ENCODE measurements at regions of chr17 and their contacts with region 1.

Region 1: GRCh38 chr17:75784473-75785015 is at the start of gene UNK:
- DNase-seq: peak; percentile 89 to 98 (median 95)
- ATAC-seq: peak; percentile 75 to 82 (median 79)
- H3K4me3 ChIP-seq: peak within 1 kb of the TSS; percentile 75 to 82
- H3K4me3 Mint-ChIP-seq: peak within 1 kb of the TSS; percentile 81 to 91 (median 87)
- H3K27ac ChIP-seq: peak within 1 kb of the TSS; percentile 100
- H3K27ac Mint-ChIP-seq: peak within 1 kb of the TSS; percentile 99 to 100
- H3K4me1 ChIP-seq: peaks cover 27 to 42% of the 10 kb centered on the region in 2 experiments
- H3K4me1 Mint-ChIP-seq: peaks cover 50 to 60% (median 57%) of the 10 kb centered on the region in 3 donors
- H3K27me3 ChIP-seq: no peaks in the 10 kb centered on the region
- H3K27me3 Mint-ChIP-seq: peaks cover 0 to 1% of the 10 kb centered on the region in 2 donors
- total RNA-seq, gene UNK: 37.1 to 50.3 (median 39.2) TPM

Region 2: DNA sequence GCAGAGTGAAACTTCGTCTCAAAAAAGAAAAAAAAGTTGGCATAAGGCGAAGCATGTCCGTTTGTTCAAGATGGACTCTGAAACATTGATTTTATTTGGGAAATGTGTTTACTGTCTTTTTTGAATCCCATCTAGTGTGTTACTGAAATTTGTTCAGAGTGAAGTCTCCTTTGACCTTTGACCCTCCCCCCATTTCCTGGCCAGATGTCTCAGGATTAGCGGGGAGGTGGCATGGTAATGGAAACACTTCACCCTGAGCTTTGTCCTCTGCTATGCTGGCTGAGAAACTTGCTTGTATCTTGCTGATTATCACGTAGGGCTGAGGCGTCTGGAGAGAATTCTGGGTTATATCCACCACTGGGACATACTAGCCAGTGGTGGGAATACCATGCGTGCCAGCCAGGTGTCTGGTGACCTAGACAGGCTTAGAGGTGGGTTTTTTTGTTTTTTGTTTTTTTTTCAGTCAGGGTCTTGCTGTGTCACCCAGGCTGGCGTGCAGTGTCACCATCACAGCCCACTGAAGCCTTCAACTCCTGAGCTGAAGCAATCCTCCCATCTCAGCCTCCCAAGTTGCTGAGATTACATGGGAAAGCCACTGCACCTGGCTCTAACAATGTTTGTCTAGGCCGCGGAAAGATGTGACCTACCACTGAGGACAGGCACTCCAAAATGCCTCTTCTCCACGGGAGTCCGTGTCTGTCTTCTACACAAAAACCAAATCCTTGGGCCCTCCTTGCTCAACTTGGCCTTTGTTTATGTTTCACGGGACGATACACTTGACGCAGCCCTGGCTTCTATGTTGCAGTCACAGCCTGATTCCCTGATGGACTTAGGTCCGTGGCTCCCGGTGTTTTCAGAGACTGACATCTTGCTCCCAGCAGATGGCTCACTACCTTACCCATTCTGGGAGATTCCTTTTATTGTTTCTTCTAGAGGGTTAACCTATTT is 12.9 kb before region 1 on chr17:
- CTCF ChIA-PET with region 1: interaction called in 1 of 2 experiments, 11 read pairs
- POLR2A ChIA-PET with region 1: interaction called in 1 of 2 experiments, 16 read pairs
- DNase-seq: no peak
- ATAC-seq: no peak
- H3K4me3 ChIP-seq: no peak overlapping the region
- H3K4me3 Mint-ChIP-seq: no peak overlapping the region
- H3K27ac ChIP-seq: no peak overlapping the region
- H3K27ac Mint-ChIP-seq: peak overlapping the region in 1 of 2 donors; percentile 55
- H3K4me1 ChIP-seq: peaks cover 2 to 6% of the 10 kb centered on the region in 2 experiments
- H3K4me1 Mint-ChIP-seq: peaks cover 14 to 20% (median 14%) of the 10 kb centered on the region in 3 donors
- H3K27me3 ChIP-seq: no peaks in the 10 kb centered on the region
- H3K27me3 Mint-ChIP-seq: no peaks in the 10 kb centered on the region

Region 3: GRCh38 chr17:75808905-75809715 is 24.6 kb after region 1 on chr17:
- CTCF ChIA-PET with region 1: no interaction called
- POLR2A ChIA-PET with region 1: no interaction called
- DNase-seq: no peak
- ATAC-seq: no peak
- H3K4me3 ChIP-seq: no peak overlapping the region
- H3K4me3 Mint-ChIP-seq: no peak overlapping the region
- H3K27ac ChIP-seq: no peak overlapping the region
- H3K27ac Mint-ChIP-seq: peak overlapping the region in 1 of 2 donors; percentile 34
- H3K4me1 ChIP-seq: peaks cover 0 to 4% of the 10 kb centered on the region in 2 experiments
- H3K4me1 Mint-ChIP-seq: peaks cover 0 to 4% (median 2%) of the 10 kb centered on the region in 3 donors
- H3K27me3 ChIP-seq: no peaks in the 10 kb centered on the region
- H3K27me3 Mint-ChIP-seq: no peaks in the 10 kb centered on the region

Region 4: GRCh38 chr17:75830164-75830929 is 45.8 kb after region 1 on chr17:
- CTCF ChIA-PET with region 1: interaction called in 1 of 2 experiments, 11 read pairs
- POLR2A ChIA-PET with region 1: interaction called in 1 of 2 experiments, 4 read pairs
- DNase-seq: peak in 12 of 35 experiments; percentile 8 to 56 (median 32)
- ATAC-seq: no peak
- H3K4me3 ChIP-seq: no peak overlapping the region
- H3K4me3 Mint-ChIP-seq: no peak overlapping the region
- H3K27ac ChIP-seq: peak overlapping the region; percentile 34
- H3K27ac Mint-ChIP-seq: no peak overlapping the region
- H3K4me1 ChIP-seq: peaks cover 28 to 74% of the 10 kb centered on the region in 2 experiments
- H3K4me1 Mint-ChIP-seq: peaks cover 35 to 45% (median 39%) of the 10 kb centered on the region in 3 donors
- H3K27me3 ChIP-seq: no peaks in the 10 kb centered on the region
- H3K27me3 Mint-ChIP-seq: no peaks in the 10 kb centered on the region

Region 5: DNA sequence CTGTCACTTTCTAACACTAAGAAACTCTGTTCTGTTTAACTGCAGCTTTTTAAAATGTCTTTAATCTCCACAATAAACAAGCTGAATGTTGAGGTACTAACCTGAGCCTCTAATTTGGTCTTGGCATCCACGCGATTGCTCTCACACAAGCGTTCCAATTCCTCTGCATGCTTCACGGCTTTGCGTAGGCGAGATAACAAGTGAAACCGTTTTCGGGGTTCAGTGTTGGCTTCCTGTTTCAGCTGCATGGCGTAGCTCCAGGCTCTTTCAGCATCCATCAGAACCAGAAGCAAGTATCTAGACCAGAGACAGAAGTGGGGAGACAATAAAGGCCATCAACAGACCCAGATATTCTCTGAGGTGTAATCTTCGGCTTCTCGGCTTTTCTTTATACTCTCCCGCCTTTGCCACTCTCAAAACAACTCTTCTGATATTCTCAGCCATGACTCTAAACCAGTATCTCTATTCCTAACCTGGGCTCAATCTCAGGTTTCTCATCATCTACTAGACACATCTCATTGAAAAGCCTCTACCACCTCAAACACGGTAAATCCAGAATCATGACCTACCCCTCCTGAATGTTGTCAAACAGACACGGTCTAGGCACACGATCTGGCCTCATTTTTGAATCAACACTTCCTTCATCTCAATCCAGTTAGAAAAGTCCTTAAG is 279.5 kb after region 1 on chr17:
- CTCF ChIA-PET with region 1: no interaction called
- POLR2A ChIA-PET with region 1: interaction called in 1 of 2 experiments, 20 read pairs
- DNase-seq: peak in 24 of 35 experiments; percentile 21 to 71 (median 38)
- ATAC-seq: peak; percentile 74 to 88 (median 82)
- H3K4me3 ChIP-seq: no peak overlapping the region
- H3K4me3 Mint-ChIP-seq: peak overlapping the region; percentile 10 to 61 (median 53)
- H3K27ac ChIP-seq: peak overlapping the region; percentile 81
- H3K27ac Mint-ChIP-seq: peak overlapping the region; percentile 89 to 91
- H3K4me1 ChIP-seq: peaks cover 0 to 10% of the 10 kb centered on the region in 2 experiments
- H3K4me1 Mint-ChIP-seq: peaks cover 15 to 24% (median 18%) of the 10 kb centered on the region in 3 donors
- H3K27me3 ChIP-seq: no peaks in the 10 kb centered on the region
- H3K27me3 Mint-ChIP-seq: no peaks in the 10 kb centered on the region

Measured in T-cell (primary cell).